Aorta (tissue), 5 donors: ENCODE measurements at regions of chr11 and their contacts with region 1.

Region 1: DNA sequence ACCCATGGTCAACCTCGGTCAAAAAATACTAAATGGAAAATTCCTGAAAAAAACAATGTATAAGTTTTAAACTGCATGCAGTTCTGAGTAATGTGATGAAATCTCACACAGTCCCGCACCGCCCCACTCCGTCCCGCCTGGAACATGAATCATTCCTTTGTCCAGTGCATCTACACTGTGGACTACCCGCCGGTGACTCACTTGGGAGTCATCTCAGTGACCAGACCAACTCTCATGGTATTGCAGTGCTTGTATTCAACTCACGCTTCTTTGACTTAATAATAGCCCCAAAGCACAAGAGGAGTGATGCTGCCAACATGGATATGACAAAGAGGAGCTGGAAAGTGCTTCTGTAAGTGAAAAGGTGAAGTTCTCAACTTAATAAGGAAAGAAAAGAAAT is 48.8 kb downstream of the ARHGAP32 start:
- DNase-seq: peak; percentile 91 to 94
- ATAC-seq: peak; percentile 91
- H3K4me3 ChIP-seq: no peak overlapping the region
- H3K27ac ChIP-seq: no peak overlapping the region
- H3K4me1 ChIP-seq: peaks cover 0 to 2% of the 10 kb centered on the region in 2 donors
- H3K27me3 ChIP-seq: no peaks in the 10 kb centered on the region

Region 2: GRCh38 chr11:128948589-128948988 is 194.7 kb before region 1 on chr11:
- intact Hi-C with region 1: no loop called
- DNase-seq: no peak
- ATAC-seq: no peak
- H3K4me3 ChIP-seq: no peak overlapping the region
- H3K27ac ChIP-seq: no peak overlapping the region
- H3K4me1 ChIP-seq: no peaks in the 10 kb centered on the region
- H3K27me3 ChIP-seq: no peaks in the 10 kb centered on the region

Region 3: DNA sequence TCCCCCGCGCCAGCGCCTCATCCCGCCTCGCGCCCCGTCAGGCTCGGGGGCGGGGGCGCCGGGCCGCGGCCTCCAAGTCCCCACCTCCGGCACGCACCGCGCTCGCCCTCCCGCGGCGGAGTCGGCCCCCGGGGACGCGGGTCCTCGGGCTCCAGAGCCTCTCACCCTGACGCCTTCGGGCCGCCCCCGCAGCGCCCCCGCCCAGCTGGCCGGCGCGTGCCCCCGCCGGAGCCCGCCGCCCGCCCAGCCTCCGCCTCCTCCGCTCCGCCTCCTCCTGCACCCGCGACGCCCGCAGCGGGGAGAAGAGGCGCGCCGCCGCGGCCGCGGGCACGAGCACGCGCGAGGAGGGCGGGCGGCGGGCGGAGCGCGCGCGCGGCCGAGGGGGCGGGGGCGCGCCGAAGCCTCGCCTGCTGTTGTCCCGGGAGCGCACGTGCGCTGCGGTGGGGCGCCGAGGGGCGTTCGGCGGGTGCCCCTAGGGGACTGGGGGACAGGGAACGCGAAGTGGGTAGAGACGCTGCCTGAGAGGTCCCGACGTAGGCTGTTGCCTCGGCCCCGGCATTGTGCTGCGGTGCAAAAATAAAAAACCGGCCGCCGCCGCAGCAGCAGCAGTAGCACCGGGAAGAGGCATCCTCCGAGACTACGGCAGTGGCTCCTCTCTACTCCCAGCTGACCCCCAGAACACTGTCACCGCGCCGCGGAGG is 136.1 kb after region 1 on chr11:
- intact Hi-C with region 1: loop called in 1 of 2 experiments (anchors 10 kb)
- DNase-seq: peak; percentile 84 to 93
- ATAC-seq: peak; percentile 93
- H3K4me3 ChIP-seq: peak overlapping the region; percentile 92 to 99
- H3K27ac ChIP-seq: no peak overlapping the region
- H3K4me1 ChIP-seq: no peaks in the 10 kb centered on the region
- H3K27me3 ChIP-seq: no peaks in the 10 kb centered on the region

Region 4: GRCh38 chr11:129323896-129324512 is 180.7 kb after region 1 on chr11:
- intact Hi-C with region 1: no loop called
- DNase-seq: peak in 1 of 2 donors; percentile 61
- ATAC-seq: peak; percentile 63
- H3K4me3 ChIP-seq: no peak overlapping the region
- H3K27ac ChIP-seq: no peak overlapping the region
- H3K4me1 ChIP-seq: no peaks in the 10 kb centered on the region
- H3K27me3 ChIP-seq: no peaks in the 10 kb centered on the region